ENCODE measurements at regions of chr10 and their contacts with region 1.

Region 1: DNA sequence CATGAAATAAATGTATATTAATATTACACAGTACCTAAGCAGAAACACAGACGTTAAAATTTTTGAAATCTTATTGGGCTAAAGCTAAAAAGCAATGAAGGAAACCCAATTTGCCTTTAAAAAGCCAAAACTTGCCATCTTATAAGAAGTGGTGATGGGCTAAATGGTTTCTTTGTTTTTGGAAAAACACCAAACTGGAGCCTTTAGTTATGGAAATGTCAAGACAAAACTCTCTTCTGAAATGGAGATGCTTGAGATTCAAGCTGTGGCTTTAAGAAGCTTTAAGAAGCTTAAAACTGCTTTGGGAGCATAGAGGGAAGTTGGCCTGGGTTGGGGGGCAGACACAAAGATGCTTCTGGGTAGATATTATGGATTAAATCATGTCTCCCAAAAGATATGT is 277.0 kb downstream of the GFRA1 start:
- DNase-seq: no peak
- H3K4me3 ChIP-seq: no peak overlapping the region
- CTCF ChIP-seq: no peak
- POLR2A ChIP-seq: no peak

Region 2: DNA sequence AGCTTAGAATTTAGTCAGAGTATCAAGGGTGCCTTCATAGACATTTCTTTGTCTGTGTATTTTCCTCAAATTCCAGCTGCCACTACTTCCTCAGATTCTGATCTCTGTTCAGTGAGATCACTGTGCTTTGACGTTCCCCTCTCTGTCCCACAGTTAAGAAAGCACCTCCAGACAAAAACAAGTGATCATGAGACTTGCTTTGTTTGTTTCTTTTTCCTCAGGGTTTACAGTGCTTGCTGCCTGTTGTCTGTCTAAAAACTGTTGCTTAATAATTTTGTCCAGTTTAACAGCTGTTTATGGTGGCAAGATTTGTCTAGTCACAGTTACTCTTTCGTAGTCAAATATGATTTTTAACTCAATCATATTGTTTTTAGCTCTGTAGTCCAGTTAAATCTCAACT is 1029.0 kb before region 1 on chr10:
- intact Hi-C with region 1: no loop called
- DNase-seq: no peak
- H3K4me3 ChIP-seq: no peak overlapping the region
- CTCF ChIP-seq: no peak
- POLR2A ChIP-seq: no peak

Region 3: DNA sequence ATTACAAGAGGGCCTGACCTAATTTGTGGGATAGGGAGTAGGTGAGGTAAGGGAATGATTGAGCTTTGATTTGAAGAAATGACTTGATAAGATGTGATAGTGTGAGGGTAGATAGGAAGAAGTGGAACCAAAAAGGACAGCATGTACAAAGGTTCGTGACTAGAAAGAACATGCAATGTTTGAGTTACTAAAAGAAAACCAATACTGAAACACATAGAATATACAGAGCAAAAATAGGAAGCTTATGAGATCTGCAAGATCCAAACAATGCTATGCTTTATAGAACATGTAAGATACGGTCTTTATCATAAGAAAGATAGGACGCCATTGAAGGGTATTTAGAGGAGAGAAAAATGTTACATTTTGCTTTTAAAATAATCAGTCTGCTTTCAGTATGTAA is 559.0 kb before region 1 on chr10:
- intact Hi-C with region 1: loop called (anchors 5 kb)
- DNase-seq: no peak
- H3K4me3 ChIP-seq: no peak overlapping the region
- CTCF ChIP-seq: no peak
- POLR2A ChIP-seq: no peak

Measured in lower leg skin (tissue), 4 donors.